H1 (cell line): ENCODE measurements at regions of chr14 and their contacts with region 1.

Region 1: DNA sequence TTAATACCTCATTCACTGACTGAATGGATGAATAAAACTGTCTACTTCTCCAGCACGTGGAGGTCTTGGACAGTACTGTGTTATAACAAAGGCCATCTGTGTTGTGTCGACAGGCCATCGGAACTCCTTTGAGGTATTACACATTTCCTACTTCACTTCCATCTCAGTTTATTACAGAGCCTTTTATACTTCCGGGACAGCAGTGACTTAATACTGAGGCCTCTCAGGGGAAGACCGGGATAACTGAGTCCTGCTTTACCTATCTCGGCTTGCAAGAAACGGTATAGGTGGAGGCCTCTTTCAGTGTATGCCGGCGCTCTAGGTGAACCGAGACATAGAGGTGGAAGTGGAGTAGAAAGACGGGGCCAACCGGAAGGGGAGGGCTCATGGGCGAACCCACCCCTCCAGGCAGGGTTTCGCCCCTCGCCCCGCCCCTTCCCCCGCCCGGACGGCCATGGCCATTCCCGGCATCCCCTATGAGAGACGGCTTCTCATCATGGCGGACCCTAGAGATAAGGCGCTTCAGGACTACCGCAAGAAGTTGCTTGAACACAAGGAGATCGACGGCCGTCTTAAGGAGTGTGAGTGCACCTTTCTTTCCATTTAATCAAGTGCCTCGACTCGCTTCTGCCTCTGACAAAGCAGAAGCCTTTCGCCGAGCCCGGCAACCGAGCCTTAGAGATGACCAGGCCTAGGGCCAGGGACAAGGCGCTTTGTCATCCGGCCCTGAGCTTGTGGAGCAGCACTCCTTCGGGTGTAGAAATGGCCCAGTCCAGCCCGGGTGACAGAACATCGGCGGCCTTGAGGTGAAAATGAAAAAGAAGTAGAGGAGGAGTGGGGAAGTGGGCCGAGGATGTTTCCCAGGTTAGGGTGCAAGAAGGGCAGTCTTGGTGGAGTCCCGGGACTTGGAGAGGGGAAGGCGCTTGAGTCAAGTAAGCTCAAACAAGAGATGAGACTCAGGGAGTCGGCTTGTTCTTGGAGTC is at the start of gene PSMC6:
- DNase-seq: peak; percentile 68 to 92
- H3K4me3 ChIP-seq: peak within 1 kb of the TSS; percentile 85 to 99 (median 94)
- H3K27ac ChIP-seq: peak within 1 kb of the TSS; percentile 94
- H3K4me1 ChIP-seq: peaks cover 0 to 3% (median 1%) of the 10 kb centered on the region in 4 experiments; a peak in 1 of 7 replicates
- H3K27me3 ChIP-seq: no peaks in the 10 kb centered on the region
- CTCF ChIP-seq: no peak
- EP300 ChIP-seq: no peak
- POLR2A ChIP-seq: peak; percentile 58 to 95
- RAD21 ChIP-seq: no peak
- total RNA-seq, gene PSMC6: 103 and 107 TPM in 2 replicates

Region 2: DNA sequence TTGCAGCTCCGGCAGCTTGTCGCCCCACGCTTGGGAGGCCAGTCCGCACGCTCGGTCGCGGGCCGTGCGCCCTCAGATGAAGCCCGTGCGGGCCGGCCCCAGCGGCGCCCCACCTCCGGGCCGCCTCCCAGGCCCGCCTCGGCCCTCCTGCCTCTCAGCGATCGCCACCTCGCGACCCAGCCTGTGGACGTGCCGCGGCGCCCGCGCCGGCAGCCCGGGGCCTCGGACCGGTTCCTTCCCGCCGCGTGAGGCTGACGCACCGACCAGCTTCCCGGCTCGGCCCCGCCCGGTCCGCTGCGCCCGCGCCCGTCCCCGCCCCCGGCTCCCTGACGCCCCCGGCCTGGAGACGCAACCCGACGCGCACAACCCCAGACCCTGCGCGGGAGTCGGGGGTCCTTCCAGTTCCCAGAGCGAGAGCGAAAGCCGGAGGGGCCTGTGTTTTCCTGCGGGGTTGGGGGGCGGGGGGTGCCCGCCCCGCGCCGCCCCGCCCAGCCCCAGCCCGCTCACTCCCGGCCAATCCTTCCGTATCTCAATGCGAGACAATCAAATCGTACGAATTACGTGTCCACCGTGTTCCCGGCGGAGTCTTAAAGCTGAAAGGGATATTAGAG is 11.4 kb before region 1 on chr14 and contains the start of gene ERO1A:
- CTCF ChIA-PET with region 1: no interaction called
- POLR2A ChIA-PET with region 1: interaction called, 19 read pairs
- DNase-seq: peak in 1 of 2 experiments; percentile 82
- H3K4me3 ChIP-seq: peak within 1 kb of the TSS; percentile 83 to 94 (median 88)
- H3K27ac ChIP-seq: peak within 1 kb of the TSS; percentile 54; the same call in 1 of the 2 replicates
- H3K4me1 ChIP-seq: peaks cover 0 to 3% (median 0%) of the 10 kb centered on the region in 4 experiments; a peak in 2 of 7 replicates
- H3K27me3 ChIP-seq: no peaks in the 10 kb centered on the region
- CTCF ChIP-seq: no peak
- EP300 ChIP-seq: peak in 1 of 2 experiments; percentile 40; a peak in 1 of 3 replicates
- POLR2A ChIP-seq: peak in 1 of 2 experiments; percentile 43; a peak in 2 of 3 replicates
- RAD21 ChIP-seq: no peak
- total RNA-seq, gene ERO1A: 36.5 and 42.0 TPM in 2 replicates

Region 3: DNA sequence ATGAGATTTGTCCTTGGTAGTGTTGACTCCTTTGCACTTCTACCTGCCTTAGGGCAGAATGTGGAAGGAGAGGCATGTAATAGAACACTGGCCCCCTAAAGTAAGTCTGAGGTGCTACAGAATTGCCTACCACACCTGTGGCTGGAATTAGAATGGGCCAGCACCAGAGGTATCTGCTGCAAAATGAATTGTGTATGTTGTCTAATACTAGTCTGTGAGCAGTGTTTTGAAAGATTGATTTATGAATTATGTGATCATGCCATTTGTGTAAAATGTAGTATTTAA is 17.3 kb after region 1 on chr14:
- CTCF ChIA-PET with region 1: interaction called, 5 read pairs
- POLR2A ChIA-PET with region 1: interaction called, 17 read pairs
- DNase-seq: no peak
- H3K4me3 ChIP-seq: no peak overlapping the region
- H3K27ac ChIP-seq: no peak overlapping the region
- H3K4me1 ChIP-seq: no peaks in the 10 kb centered on the region
- H3K27me3 ChIP-seq: no peaks in the 10 kb centered on the region
- CTCF ChIP-seq: peak in 1 of 3 experiments; percentile 14; a peak in 1 of 4 replicates
- EP300 ChIP-seq: no peak
- POLR2A ChIP-seq: no peak
- RAD21 ChIP-seq: no peak; a peak in 1 of 4 replicates